AG04450 (cell line): ENCODE measurements at regions of chr9 and their contacts with region 1.

Region 1: DNA sequence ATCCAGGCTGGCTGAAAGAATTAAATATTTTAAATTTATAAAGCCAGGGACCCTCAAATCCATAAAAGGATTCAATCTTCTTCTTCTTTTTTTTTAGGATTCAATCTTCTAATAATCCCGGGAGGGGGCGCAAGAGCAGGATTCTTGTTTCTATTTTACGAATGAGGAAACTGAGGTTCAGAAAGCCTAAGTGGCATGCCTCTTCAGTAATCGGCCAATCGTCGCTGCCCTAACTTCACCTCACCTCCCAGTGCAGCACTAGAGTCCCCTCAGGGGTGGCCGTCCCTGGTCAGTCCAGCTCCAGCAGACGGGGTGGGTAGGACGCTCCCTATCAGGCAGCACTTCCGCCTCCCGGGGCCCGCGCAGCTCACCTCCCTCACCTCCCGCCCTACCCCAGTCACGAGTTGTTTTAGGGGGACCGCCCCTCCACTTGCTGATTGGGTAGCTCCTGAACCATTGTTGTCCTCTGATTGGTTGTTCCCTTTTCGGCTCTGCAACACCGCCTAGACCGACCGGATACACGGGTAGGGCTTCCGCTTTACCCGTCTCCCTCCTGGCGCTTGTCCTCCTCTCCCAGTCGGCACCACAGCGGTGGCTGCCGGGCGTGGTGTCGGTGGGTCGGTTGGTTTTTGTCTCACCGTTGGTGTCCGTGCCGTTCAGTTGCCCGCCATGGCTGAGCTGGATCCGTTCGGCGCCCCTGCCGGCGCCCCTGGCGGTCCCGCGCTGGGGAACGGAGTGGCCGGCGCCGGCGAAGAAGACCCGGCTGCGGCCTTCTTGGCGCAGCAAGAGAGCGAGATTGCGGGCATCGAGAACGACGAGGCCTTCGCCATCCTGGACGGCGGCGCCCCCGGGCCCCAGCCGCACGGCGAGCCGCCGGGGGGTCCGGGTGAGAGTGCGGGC is at the start of gene CLTA:
- DNase-seq: peak; percentile 92
- H3K4me3 ChIP-seq: peak within 1 kb of the TSS; percentile 96
- H3K27ac ChIP-seq: peak within 1 kb of the TSS; percentile 89
- H3K27me3 ChIP-seq: no peaks in the 10 kb centered on the region
- CTCF ChIP-seq: peak; percentile 74
- polyA plus RNA-seq, gene CLTA: 314 and 364 TPM in 2 replicates

Region 2: GRCh38 chr9:35891646-35892045 is 299.0 kb before region 1 on chr9:
- CTCF ChIA-PET with region 1: no interaction called
- POLR2A ChIA-PET with region 1: no interaction called
- DNase-seq: no peak
- H3K4me3 ChIP-seq: no peak overlapping the region
- H3K27ac ChIP-seq: no peak overlapping the region
- H3K27me3 ChIP-seq: peaks cover 21% of the 10 kb centered on the region
- CTCF ChIP-seq: no peak

Region 3: GRCh38 chr9:35954942-35955546 is 235.6 kb before region 1 on chr9:
- CTCF ChIA-PET with region 1: interaction called, 17 read pairs
- POLR2A ChIA-PET with region 1: no interaction called
- DNase-seq: peak; percentile 78
- H3K4me3 ChIP-seq: no peak overlapping the region
- H3K27ac ChIP-seq: no peak overlapping the region
- H3K27me3 ChIP-seq: no peaks in the 10 kb centered on the region
- CTCF ChIP-seq: peak; percentile 91

Region 4: DNA sequence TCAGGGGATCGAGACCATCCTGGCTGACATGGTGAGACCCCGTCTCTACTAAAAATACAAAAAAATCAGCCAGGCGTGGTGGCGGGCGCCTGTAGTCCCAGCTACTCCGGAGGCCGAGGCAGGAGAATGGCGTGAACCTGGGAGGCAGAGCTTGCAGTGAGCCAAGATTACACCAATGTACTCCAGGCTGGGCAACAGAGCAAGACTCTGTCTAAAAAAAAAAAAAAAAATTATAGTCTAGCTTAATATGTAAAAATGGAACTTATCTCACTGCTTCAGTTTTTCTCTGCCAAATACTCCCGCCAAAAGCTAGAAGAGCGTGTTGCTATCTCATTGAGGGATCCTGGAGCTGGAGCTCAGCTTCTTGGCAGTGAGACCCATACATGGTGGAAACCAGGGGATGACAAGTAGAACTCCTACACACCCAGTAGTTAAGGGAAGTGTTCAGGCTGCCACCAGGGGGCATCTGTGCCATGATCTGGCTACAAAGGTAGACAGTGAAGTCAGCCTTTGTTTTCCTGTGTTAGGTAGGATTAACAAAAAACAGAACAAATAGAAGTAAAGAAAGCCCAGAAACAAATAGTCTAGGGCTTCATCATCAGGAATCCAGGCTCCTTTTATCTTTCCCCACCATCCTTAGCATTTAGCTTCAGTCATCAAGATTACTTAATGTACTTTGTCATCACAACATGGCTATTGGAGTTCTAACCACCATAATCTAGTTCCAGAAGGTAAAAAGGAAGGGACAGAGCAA is 87.7 kb before region 1 on chr9:
- CTCF ChIA-PET with region 1: interaction called, 11 read pairs
- POLR2A ChIA-PET with region 1: interaction called, 13 read pairs
- DNase-seq: no peak
- H3K4me3 ChIP-seq: no peak overlapping the region
- H3K27ac ChIP-seq: peak overlapping the region; percentile 86
- H3K27me3 ChIP-seq: no peaks in the 10 kb centered on the region
- CTCF ChIP-seq: peak; percentile 65

Region 5: DNA sequence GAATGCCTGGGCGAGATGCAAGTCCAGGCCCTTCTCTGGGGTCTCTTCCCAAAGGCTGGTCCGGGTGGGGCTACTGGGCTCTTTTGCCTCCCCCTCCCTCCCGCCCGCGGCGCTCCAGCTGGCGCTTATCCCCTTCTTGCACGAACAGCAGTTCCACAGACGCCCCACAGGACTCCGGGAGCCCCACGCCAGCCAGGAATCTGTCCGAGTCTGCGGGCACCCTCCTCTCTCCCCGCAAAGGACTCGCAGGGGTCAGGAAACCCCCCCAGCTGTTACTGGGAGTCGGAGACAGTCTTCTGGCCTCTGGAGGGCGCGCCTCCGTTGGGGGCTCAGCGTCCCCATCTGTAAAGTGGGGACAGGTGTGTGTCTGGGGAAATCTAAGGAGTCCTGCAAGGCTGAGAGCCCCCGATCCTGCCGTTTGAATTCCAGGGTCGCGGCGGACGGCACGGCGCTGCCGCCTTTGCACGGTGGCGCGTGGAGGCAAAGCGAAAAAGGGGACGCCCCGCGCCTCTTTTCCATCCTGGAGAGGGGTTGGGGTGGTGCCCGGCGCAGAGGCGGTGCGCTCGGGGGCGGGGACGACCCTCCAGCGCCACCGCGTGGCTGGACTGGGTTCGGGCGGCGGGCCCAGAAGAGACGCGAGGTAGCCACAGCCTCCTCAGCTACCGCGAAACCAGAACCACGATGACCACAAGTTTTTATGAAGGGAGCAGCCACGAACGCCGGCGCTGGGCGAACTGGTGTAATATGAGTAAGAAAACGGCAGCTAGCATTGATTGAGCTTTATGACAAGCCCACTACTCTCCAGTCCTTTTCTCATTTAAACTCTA is 24.3 kb before region 1 on chr9:
- CTCF ChIA-PET with region 1: interaction called, 16 read pairs
- POLR2A ChIA-PET with region 1: interaction called, 7 read pairs
- DNase-seq: no peak
- H3K4me3 ChIP-seq: peak overlapping the region; percentile 63
- H3K27ac ChIP-seq: peak overlapping the region; percentile 57
- H3K27me3 ChIP-seq: no peaks in the 10 kb centered on the region
- CTCF ChIP-seq: peak; percentile 84

Region 6: DNA sequence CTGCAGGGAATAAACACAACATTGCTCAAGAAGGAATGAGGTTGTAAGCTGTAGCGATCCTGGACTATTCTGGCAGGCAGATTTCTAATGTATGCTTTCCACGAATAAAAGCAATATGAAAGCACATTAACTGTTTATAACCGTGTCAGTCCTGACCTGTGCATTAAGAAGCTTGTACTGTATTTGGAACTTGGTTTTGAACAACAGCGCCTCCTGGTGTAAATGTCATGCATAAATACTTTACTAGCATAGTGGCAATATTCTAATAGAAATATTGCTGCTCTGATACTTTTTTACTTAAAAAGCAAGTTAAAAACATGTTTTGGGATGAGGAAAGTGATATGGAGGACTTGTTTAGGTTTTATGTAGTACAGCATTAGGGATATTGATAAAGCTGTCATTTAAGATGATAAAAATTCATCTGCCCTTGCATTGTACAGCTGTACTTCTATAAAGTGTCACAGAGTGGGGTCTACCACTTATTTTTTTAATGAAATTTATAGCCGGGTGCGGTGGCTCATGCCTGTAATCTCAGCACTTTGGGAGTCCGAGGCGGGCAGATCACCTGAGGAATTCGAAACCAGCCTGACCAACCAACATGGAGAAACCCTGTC is 138.3 kb after region 1 on chr9:
- CTCF ChIA-PET with region 1: interaction called, 14 read pairs
- POLR2A ChIA-PET with region 1: interaction called, 3 read pairs
- DNase-seq: peak; percentile 64
- H3K4me3 ChIP-seq: no peak overlapping the region
- H3K27ac ChIP-seq: no peak overlapping the region
- H3K27me3 ChIP-seq: no peaks in the 10 kb centered on the region
- CTCF ChIP-seq: peak; percentile 75

Region 7: GRCh38 chr9:36542355-36542754 is 351.7 kb after region 1 on chr9:
- CTCF ChIA-PET with region 1: no interaction called
- POLR2A ChIA-PET with region 1: no interaction called
- DNase-seq: no peak
- H3K4me3 ChIP-seq: no peak overlapping the region
- H3K27ac ChIP-seq: no peak overlapping the region
- H3K27me3 ChIP-seq: no peaks in the 10 kb centered on the region
- CTCF ChIP-seq: no peak